CD4-positive, alpha-beta T cell (primary cell): ENCODE measurements at regions of chr19 and their contacts with region 1.

Region 1: GRCh38 chr19:39341719-39342604 is at the start of gene SAMD4B:
- DNase-seq: peak; percentile 98 to 100 (median 99)
- ATAC-seq: peak; percentile 88
- H3K4me3 ChIP-seq: peak within 1 kb of the TSS; percentile 85
- H3K4me3 Mint-ChIP-seq: peak within 1 kb of the TSS; percentile 99
- H3K27ac ChIP-seq: peak within 1 kb of the TSS; percentile 65 to 82
- H3K27ac Mint-ChIP-seq: peak within 1 kb of the TSS; percentile 91
- H3K4me1 ChIP-seq: peaks cover 64% of the 10 kb centered on the region
- H3K4me1 Mint-ChIP-seq: peaks cover 77% of the 10 kb centered on the region
- H3K27me3 ChIP-seq: no peaks in the 10 kb centered on the region
- H3K27me3 Mint-ChIP-seq: no peaks in the 10 kb centered on the region
- CTCF ChIP-seq: peak; percentile 72
- total RNA-seq, gene SAMD4B: 65.0 to 66.9 TPM

Region 2: GRCh38 chr19:39328046-39328705 is 13.8 kb before region 1 on chr19:
- CTCF ChIA-PET with region 1: interaction called, 9 read pairs
- POLR2A ChIA-PET with region 1: interaction called, 14 read pairs
- intact Hi-C with region 1: no loop called
- DNase-seq: peak; percentile 71 to 89 (median 80)
- ATAC-seq: peak; percentile 82
- H3K4me3 ChIP-seq: no peak overlapping the region
- H3K4me3 Mint-ChIP-seq: peak overlapping the region; percentile 68
- H3K27ac ChIP-seq: no peak overlapping the region
- H3K27ac Mint-ChIP-seq: peak overlapping the region; percentile 83
- H3K4me1 ChIP-seq: peaks cover 63% of the 10 kb centered on the region
- H3K4me1 Mint-ChIP-seq: peaks cover 33% of the 10 kb centered on the region
- H3K27me3 ChIP-seq: no peaks in the 10 kb centered on the region
- H3K27me3 Mint-ChIP-seq: no peaks in the 10 kb centered on the region
- CTCF ChIP-seq: peak; percentile 98

Region 3: GRCh38 chr19:39390755-39391592 is 49.0 kb after region 1 on chr19 and contains the starts of genes MED29 and PAF1:
- CTCF ChIA-PET with region 1: interaction called, 10 read pairs
- POLR2A ChIA-PET with region 1: interaction called, 22 read pairs
- intact Hi-C with region 1: loop called (anchors 1 to 2 kb)
- DNase-seq: peak; percentile 91 to 100 (median 94)
- ATAC-seq: peak; percentile 90
- H3K4me3 ChIP-seq: peak within 1 kb of the TSS; percentile 91
- H3K4me3 Mint-ChIP-seq: peak within 1 kb of the TSS; percentile 90
- H3K27ac ChIP-seq: peak within 1 kb of the TSS; percentile 98 to 100
- H3K27ac Mint-ChIP-seq: peak within 1 kb of the TSS; percentile 96
- H3K4me1 ChIP-seq: peaks cover 44% of the 10 kb centered on the region
- H3K4me1 Mint-ChIP-seq: peaks cover 33% of the 10 kb centered on the region
- H3K27me3 ChIP-seq: no peaks in the 10 kb centered on the region
- H3K27me3 Mint-ChIP-seq: no peaks in the 10 kb centered on the region
- CTCF ChIP-seq: no peak
- total RNA-seq, gene MED29: 45.0 to 46.1 TPM
- total RNA-seq, gene PAF1: 99.6 to 101 TPM

Region 4: GRCh38 chr19:39406656-39407393 is 64.9 kb after region 1 on chr19 and contains the start of gene ZFP36:
- CTCF ChIA-PET with region 1: interaction called, 9 read pairs
- POLR2A ChIA-PET with region 1: interaction called, 25 read pairs
- intact Hi-C with region 1: loop called in 1 of 2 experiments (anchors 2 kb)
- DNase-seq: peak; percentile 80 to 95 (median 91)
- ATAC-seq: peak; percentile 11
- H3K4me3 ChIP-seq: peak within 1 kb of the TSS; percentile 100
- H3K4me3 Mint-ChIP-seq: peak within 1 kb of the TSS; percentile 99
- H3K27ac ChIP-seq: peak within 1 kb of the TSS; percentile 100
- H3K27ac Mint-ChIP-seq: peak within 1 kb of the TSS; percentile 98
- H3K4me1 ChIP-seq: peaks cover 85% of the 10 kb centered on the region
- H3K4me1 Mint-ChIP-seq: peaks cover 56% of the 10 kb centered on the region
- H3K27me3 ChIP-seq: no peaks in the 10 kb centered on the region
- H3K27me3 Mint-ChIP-seq: peaks cover 7% of the 10 kb centered on the region
- CTCF ChIP-seq: no peak
- total RNA-seq, gene ZFP36: 1,278 to 1,362 TPM

Region 5: DNA sequence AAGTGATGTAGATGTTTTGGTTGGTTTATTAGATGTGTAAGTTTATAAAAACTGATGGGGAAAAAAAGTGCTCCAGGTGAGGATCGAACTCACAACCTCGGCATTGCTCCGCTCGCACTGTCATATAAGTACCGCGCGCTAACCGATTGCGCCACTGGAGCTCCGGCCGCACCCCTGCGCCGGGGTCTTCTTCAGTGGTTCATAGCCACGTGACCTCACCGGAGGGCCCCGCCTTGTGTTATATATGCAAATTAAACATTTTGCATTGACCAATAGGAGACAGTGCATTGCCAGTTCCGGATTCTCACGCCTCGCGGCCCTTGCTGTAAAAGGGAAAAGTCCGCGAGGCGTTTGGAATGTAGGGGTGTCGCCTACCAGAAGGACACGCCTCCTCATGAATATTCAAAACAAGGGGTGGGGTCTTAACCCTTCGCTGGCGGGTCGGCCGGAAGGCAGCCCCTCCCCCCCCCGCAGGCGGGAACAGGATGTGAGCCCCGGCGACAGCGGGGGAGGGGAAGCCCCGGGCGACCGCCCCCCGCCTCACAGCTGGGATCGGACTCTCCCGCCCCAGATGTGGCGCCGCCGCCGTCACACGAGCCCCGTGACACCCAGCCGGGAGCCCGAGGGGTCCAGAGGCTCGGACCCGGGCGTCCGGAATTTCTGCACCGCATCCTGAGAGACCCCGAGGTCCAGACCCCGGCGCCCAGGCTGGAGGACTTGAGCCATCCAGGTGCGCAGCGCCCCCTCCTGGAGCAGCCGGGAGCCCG is 70.3 kb after region 1 on chr19 and contains the start of gene PLEKHG2:
- CTCF ChIA-PET with region 1: interaction called, 9 read pairs
- POLR2A ChIA-PET with region 1: interaction called, 25 read pairs
- intact Hi-C with region 1: loop called in 1 of 2 experiments (anchors 2 kb)
- DNase-seq: peak; percentile 94 to 100 (median 97)
- ATAC-seq: peak; percentile 61
- H3K4me3 ChIP-seq: peak within 1 kb of the TSS; percentile 100
- H3K4me3 Mint-ChIP-seq: peak within 1 kb of the TSS; percentile 95
- H3K27ac ChIP-seq: peak within 1 kb of the TSS; percentile 100
- H3K27ac Mint-ChIP-seq: peak within 1 kb of the TSS; percentile 98
- H3K4me1 ChIP-seq: peaks cover 72% of the 10 kb centered on the region
- H3K4me1 Mint-ChIP-seq: peaks cover 41% of the 10 kb centered on the region
- H3K27me3 ChIP-seq: no peaks in the 10 kb centered on the region
- H3K27me3 Mint-ChIP-seq: peaks cover 12% of the 10 kb centered on the region
- CTCF ChIP-seq: peak; percentile 80
- total RNA-seq, gene PLEKHG2: 80.6 to 81.4 TPM

Region 6: GRCh38 chr19:40285353-40286234 is 943.6 kb after region 1 on chr19:
- CTCF ChIA-PET with region 1: no interaction called
- POLR2A ChIA-PET with region 1: no interaction called
- intact Hi-C with region 1: loop called in 1 of 2 experiments (anchors 10 kb)
- DNase-seq: peak; percentile 94 to 100 (median 98)
- ATAC-seq: peak; percentile 75
- H3K4me3 ChIP-seq: peak overlapping the region; percentile 68
- H3K4me3 Mint-ChIP-seq: peak overlapping the region; percentile 89
- H3K27ac ChIP-seq: peak overlapping the region; percentile 78 to 90
- H3K27ac Mint-ChIP-seq: peak overlapping the region; percentile 93
- H3K4me1 ChIP-seq: peaks cover 52% of the 10 kb centered on the region
- H3K4me1 Mint-ChIP-seq: peaks cover 46% of the 10 kb centered on the region
- H3K27me3 ChIP-seq: no peaks in the 10 kb centered on the region
- H3K27me3 Mint-ChIP-seq: no peaks in the 10 kb centered on the region
- CTCF ChIP-seq: no peak